ENCODE measurements at regions of chr6 and their contacts with region 1.

Region 1: DNA sequence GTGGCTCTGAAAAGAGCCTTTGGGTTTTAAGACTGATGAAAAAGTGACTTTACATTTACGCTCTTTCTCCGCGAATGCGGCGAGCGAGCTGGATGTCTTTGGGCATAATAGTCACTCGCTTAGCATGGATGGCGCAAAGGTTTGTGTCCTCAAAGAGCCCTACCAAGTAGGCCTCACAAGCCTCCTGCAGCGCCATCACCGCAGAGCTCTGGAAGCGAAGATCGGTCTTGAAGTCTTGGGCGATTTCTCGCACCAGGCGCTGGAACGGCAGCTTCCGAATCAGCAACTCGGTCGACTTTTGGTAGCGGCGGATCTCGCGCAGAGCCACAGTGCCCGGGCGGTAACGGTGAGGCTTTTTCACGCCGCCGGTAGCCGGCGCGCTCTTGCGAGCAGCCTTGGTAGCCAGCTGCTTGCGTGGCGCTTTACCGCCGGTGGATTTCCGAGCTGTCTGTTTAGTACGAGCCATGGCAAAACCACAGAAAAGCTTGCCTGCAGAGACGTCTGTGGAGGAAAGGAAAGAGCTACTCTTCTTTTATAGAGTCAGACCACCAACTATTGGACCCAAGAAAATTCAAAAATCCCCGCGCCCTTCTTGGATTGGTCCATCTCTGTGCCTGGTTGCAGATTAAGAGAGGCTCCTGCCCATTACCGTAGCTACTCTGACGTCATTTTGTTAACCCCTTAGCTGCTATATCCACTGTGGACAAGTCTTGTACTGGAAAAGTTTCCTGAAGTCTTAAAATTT is 55.5 kb upstream of the HFE start:
- DNase-seq: peak; percentile 99
- H3K4me3 Mint-ChIP-seq: peak overlapping the region; percentile 81
- H3K27ac Mint-ChIP-seq: peak overlapping the region; percentile 97
- H3K4me1 Mint-ChIP-seq: peaks cover 25% of the 10 kb centered on the region
- H3K27me3 Mint-ChIP-seq: no peaks in the 10 kb centered on the region
- CTCF ChIP-seq: peak; percentile 12

Region 2: DNA sequence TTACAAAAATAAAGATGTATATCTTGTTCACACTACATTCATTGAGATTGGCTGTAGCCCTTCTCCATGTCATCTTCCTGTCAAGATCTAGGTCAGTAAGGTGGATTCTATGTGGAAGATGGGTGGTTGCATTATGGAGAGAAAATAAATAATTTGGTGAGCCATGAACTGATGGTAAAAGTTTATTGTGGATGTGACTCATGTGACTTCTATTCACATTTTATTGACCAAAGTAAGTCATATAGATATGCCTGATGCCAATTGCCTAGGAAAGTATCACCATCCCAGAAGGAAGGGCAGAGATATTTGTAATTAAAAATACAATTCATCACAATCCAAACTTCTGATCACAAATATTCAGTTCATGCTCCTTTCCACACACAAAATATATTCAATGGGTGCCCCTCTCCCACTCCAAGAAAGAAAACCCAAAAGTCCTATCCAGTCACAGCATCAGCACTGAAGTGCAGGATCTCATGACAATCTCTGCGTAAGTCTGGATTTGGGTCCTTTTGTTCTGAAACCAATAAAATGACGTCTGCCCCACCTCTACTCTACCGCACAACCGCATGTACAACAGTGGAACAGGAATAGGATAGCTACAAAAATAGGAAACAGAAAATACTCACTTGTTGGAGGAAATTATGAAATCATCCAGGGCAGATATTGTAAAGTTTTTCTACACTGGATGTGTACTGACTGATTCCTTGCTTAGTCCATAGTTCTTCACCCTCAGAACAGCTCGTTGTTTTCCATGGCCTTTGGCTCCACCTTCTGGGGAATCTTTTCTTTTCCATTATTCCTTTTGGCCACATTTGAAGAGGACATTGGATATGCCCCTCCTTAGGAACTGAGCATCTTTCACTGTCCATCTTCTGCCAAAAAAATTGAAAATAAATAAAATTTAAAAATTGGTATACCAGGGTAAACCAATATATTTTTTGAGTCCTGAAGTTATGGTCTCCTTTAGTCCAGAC is 141.6 kb before region 1 on chr6:
- CTCF ChIA-PET with region 1: no interaction called
- POLR2A ChIA-PET with region 1: no interaction called
- intact Hi-C with region 1: no loop called
- DNase-seq: peak; percentile 75
- H3K4me3 Mint-ChIP-seq: no peak overlapping the region
- H3K27ac Mint-ChIP-seq: no peak overlapping the region
- H3K4me1 Mint-ChIP-seq: no peaks in the 10 kb centered on the region
- H3K27me3 Mint-ChIP-seq: no peaks in the 10 kb centered on the region
- CTCF ChIP-seq: peak; percentile 60

Region 3: GRCh38 chr6:26054857-26055669 is 23.3 kb after region 1 on chr6:
- CTCF ChIA-PET with region 1: interaction called, 6 read pairs
- POLR2A ChIA-PET with region 1: interaction called, 1,354 read pairs
- intact Hi-C with region 1: loop called (anchors 1 kb)
- DNase-seq: peak; percentile 96
- H3K4me3 Mint-ChIP-seq: peak overlapping the region; percentile 74
- H3K27ac Mint-ChIP-seq: peak overlapping the region; percentile 92
- H3K4me1 Mint-ChIP-seq: no peaks in the 10 kb centered on the region
- H3K27me3 Mint-ChIP-seq: no peaks in the 10 kb centered on the region
- CTCF ChIP-seq: no peak

Region 4: DNA sequence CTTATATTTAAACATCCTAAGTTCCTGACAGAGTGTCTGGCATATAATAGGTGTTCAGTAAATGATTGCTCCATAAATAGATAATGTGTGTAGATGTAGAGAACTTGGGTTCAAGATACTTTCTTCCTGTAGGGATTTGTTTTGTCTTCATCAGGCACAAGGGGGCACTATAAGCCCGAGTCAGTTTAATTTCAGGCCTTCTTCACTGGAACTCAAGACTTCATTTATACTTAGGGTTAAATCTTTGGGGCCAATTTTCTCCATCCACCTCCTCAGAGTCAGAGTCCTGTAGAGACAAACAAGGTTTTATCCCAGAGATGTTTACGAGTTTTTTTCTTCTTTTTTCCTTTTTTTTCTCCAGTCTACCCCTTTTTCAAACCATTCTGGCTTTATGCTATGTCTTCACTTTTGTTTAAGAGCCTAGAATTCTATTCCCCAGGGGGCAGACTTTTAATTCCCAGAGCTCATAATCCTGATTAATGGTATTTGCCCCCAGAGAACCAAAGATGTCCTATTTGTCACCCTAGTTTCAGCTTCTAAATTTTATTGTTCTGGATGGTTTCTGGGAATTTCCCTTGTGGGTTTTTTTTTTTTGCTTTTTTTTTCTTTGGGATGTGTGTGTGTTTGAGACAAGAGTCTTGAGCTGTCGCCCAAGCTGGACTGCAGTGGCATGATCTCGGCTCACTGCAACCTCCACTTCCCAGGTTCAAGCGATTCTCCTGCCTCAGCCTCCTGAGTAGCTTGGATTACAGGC is 143.8 kb after region 1 on chr6:
- CTCF ChIA-PET with region 1: no interaction called
- POLR2A ChIA-PET with region 1: interaction called, 34 read pairs
- intact Hi-C with region 1: no loop called
- DNase-seq: peak; percentile 82
- H3K4me3 Mint-ChIP-seq: peak overlapping the region; percentile 23
- H3K27ac Mint-ChIP-seq: peak overlapping the region; percentile 70
- H3K4me1 Mint-ChIP-seq: peaks cover 28% of the 10 kb centered on the region
- H3K27me3 Mint-ChIP-seq: no peaks in the 10 kb centered on the region
- CTCF ChIP-seq: peak; percentile 70

Region 5: GRCh38 chr6:26234421-26235296 is 202.9 kb after region 1 on chr6:
- CTCF ChIA-PET with region 1: no interaction called
- POLR2A ChIA-PET with region 1: interaction called, 18 read pairs
- intact Hi-C with region 1: no loop called
- DNase-seq: peak; percentile 90
- H3K4me3 Mint-ChIP-seq: peak overlapping the region; percentile 82
- H3K27ac Mint-ChIP-seq: peak overlapping the region; percentile 85
- H3K4me1 Mint-ChIP-seq: peaks cover 32% of the 10 kb centered on the region
- H3K27me3 Mint-ChIP-seq: no peaks in the 10 kb centered on the region
- CTCF ChIP-seq: no peak

Region 6: GRCh38 chr6:27838058-27838944 is 1806.5 kb after region 1 on chr6:
- CTCF ChIA-PET with region 1: interaction called, 5 read pairs
- POLR2A ChIA-PET with region 1: interaction called, 51 read pairs
- intact Hi-C with region 1: no loop called
- DNase-seq: peak; percentile 98
- H3K4me3 Mint-ChIP-seq: no peak overlapping the region
- H3K27ac Mint-ChIP-seq: no peak overlapping the region
- H3K4me1 Mint-ChIP-seq: peaks cover 32% of the 10 kb centered on the region
- H3K27me3 Mint-ChIP-seq: no peaks in the 10 kb centered on the region
- CTCF ChIP-seq: no peak

Measured in MCF 10A (cell line).